ENCODE measurements at regions of chr2 and their contacts with region 1.

Region 1: DNA sequence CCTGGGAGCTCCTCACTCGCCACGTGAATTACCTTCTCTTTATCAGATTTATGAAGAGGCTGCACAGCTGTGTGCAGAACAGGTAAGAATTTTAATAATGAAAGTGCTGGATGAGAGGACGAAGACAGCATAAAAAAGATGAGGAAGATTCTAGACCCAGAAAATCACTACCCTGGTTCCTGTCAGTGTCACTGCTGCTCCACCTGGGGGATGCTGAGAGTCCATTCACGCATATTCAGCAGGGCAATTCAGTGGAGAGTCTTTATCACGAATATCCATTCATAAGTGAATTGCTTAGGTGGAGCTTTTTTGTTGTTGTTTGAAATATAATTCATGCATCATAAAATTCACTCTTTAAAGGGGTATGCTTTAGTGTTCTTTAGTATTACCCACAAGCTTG is 52.0 kb downstream of the MRPL33 start:
- DNase-seq: no peak
- H3K4me3 Mint-ChIP-seq: no peak overlapping the region
- H3K27ac Mint-ChIP-seq: no peak overlapping the region
- H3K4me1 Mint-ChIP-seq: peaks cover 9% of the 10 kb centered on the region
- H3K27me3 Mint-ChIP-seq: no peaks in the 10 kb centered on the region
- CTCF ChIP-seq: no peak

Region 2: DNA sequence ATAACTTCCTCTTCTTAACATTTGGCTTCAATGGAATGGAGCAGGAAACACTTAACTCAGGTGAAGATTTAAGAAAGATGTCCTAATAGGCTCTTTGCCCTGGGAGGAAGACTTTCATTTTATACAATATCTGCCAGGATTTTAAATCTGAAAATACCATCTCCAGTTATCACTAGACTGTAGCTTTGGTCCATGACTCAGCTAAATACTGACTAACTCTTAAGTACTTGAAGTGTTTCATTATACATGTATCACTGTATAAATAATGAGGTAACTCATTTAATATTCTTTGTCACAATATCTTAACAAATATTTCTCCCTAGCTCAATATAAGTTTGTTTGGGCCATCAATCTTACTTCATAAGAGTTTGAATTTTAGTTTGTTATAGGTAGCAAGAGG is 31.9 kb after region 1 on chr2:
- CTCF ChIA-PET with region 1: no interaction called
- intact Hi-C with region 1: loop called (anchors 5 kb)
- DNase-seq: no peak
- H3K4me3 Mint-ChIP-seq: no peak overlapping the region
- H3K27ac Mint-ChIP-seq: peak overlapping the region; percentile 34
- H3K4me1 Mint-ChIP-seq: peaks cover 33% of the 10 kb centered on the region
- H3K27me3 Mint-ChIP-seq: no peaks in the 10 kb centered on the region
- CTCF ChIP-seq: no peak